HCT116 (cell line): ENCODE measurements at regions of chr15 and their contacts with region 1.

Region 1: GRCh38 chr15:41774062-41774881 is at the start of gene MAPKBP1:
- DNase-seq: peak; percentile 95
- ATAC-seq: peak; percentile 93
- H3K4me3 ChIP-seq: peak within 1 kb of the TSS; percentile 79 to 80
- H3K27ac ChIP-seq: peak within 1 kb of the TSS; percentile 73
- H3K4me1 ChIP-seq: peaks cover 14 to 31% of the 10 kb centered on the region in 2 experiments
- H3K27me3 ChIP-seq: no peaks in the 10 kb centered on the region
- CTCF ChIP-seq: peak; percentile 60 to 98 (median 71)
- POLR2A ChIP-seq: peak; percentile 42
- RAD21 ChIP-seq: peak; percentile 75
- total RNA-seq, gene MAPKBP1: 21.3 TPM

Region 2: GRCh38 chr15:41557673-41558399 is 216.4 kb before region 1 on chr15:
- CTCF ChIA-PET with region 1: interaction called, 13 read pairs
- POLR2A ChIA-PET with region 1: no interaction called
- RAD21 ChIA-PET with region 1: no interaction called
- intact Hi-C with region 1: no loop called
- DNase-seq: peak; percentile 52
- ATAC-seq: peak; percentile 77
- H3K4me3 ChIP-seq: peak overlapping the region; percentile 67 to 68
- H3K27ac ChIP-seq: peak overlapping the region; percentile 50; the same call in 1 of the 2 replicates
- H3K4me1 ChIP-seq: peaks cover 7 to 21% of the 10 kb centered on the region in 2 experiments; a peak in 3 of 4 replicates
- H3K27me3 ChIP-seq: no peaks in the 10 kb centered on the region
- CTCF ChIP-seq: peak; percentile 75 to 98 (median 97); a peak in 5 of 6 replicates
- POLR2A ChIP-seq: no peak
- RAD21 ChIP-seq: peak; percentile 80

Region 3: GRCh38 chr15:41790756-41791546 is 16.7 kb after region 1 on chr15:
- CTCF ChIA-PET with region 1: interaction called, 22 read pairs
- POLR2A ChIA-PET with region 1: interaction called, 6 read pairs
- RAD21 ChIA-PET with region 1: interaction called in 1 of 2 experiments, 3 read pairs
- intact Hi-C with region 1: no loop called
- DNase-seq: peak; percentile 28
- ATAC-seq: peak; percentile 81
- H3K4me3 ChIP-seq: peak overlapping the region in 1 of 2 experiments; percentile 36; a peak in 2 of 4 replicates
- H3K27ac ChIP-seq: peak overlapping the region; percentile 66
- H3K4me1 ChIP-seq: peaks cover 20 to 38% of the 10 kb centered on the region in 2 experiments
- H3K27me3 ChIP-seq: no peaks in the 10 kb centered on the region
- CTCF ChIP-seq: no peak
- POLR2A ChIP-seq: no peak
- RAD21 ChIP-seq: no peak

Region 4: GRCh38 chr15:41811432-41812195 is 37.3 kb after region 1 on chr15:
- CTCF ChIA-PET with region 1: interaction called, 125 read pairs
- POLR2A ChIA-PET with region 1: interaction called, 12 read pairs
- RAD21 ChIA-PET with region 1: interaction called, 13 to 15 read pairs
- intact Hi-C with region 1: loop called (anchors 1 kb)
- DNase-seq: peak; percentile 46
- ATAC-seq: peak; percentile 92
- H3K4me3 ChIP-seq: no peak overlapping the region
- H3K27ac ChIP-seq: no peak overlapping the region
- H3K4me1 ChIP-seq: peaks cover 6 to 12% of the 10 kb centered on the region in 2 experiments; a peak in 3 of 4 replicates
- H3K27me3 ChIP-seq: no peaks in the 10 kb centered on the region
- CTCF ChIP-seq: peak; percentile 90 to 94 (median 91)
- POLR2A ChIP-seq: no peak
- RAD21 ChIP-seq: peak; percentile 95

Region 5: GRCh38 chr15:41860049-41860828 is 86.0 kb after region 1 on chr15:
- CTCF ChIA-PET with region 1: no interaction called
- POLR2A ChIA-PET with region 1: no interaction called
- RAD21 ChIA-PET with region 1: no interaction called
- intact Hi-C with region 1: no loop called
- DNase-seq: no peak
- ATAC-seq: no peak
- H3K4me3 ChIP-seq: no peak overlapping the region
- H3K27ac ChIP-seq: no peak overlapping the region
- H3K4me1 ChIP-seq: peaks cover 2 to 8% of the 10 kb centered on the region in 2 experiments; a peak in 3 of 4 replicates
- H3K27me3 ChIP-seq: no peaks in the 10 kb centered on the region
- CTCF ChIP-seq: 0 out of 6 replicates have a peak, but pooled peaks of 1 of the 3 experiments have one; percentile 8
- POLR2A ChIP-seq: no peak
- RAD21 ChIP-seq: no peak

Region 6: GRCh38 chr15:41972253-41973242 is 198.3 kb after region 1 on chr15 and contains the start of gene EHD4:
- CTCF ChIA-PET with region 1: interaction called, 12 read pairs
- POLR2A ChIA-PET with region 1: no interaction called
- RAD21 ChIA-PET with region 1: no interaction called
- intact Hi-C with region 1: no loop called
- DNase-seq: peak; percentile 99
- ATAC-seq: peak; percentile 92
- H3K4me3 ChIP-seq: peak within 1 kb of the TSS; percentile 85 to 93
- H3K27ac ChIP-seq: peak within 1 kb of the TSS; percentile 86
- H3K4me1 ChIP-seq: peaks cover 21 to 36% of the 10 kb centered on the region in 2 experiments
- H3K27me3 ChIP-seq: no peaks in the 10 kb centered on the region
- CTCF ChIP-seq: peak; percentile 4 to 40 (median 38); a peak in 4 of 6 replicates
- POLR2A ChIP-seq: peak; percentile 62
- RAD21 ChIP-seq: no peak; the same call in 1 of the 2 replicates
- total RNA-seq, gene EHD4: 28.0 TPM